Cardiac septum (tissue), 1 donor: ENCODE measurements at regions of chr15 and their contacts with region 1.

Region 1: GRCh38 chr15:57647791-57648130 is 56.1 kb downstream of the MYZAP start:
- DNase-seq: no peak

Region 2: GRCh38 chr15:57596978-57597377 is 50.8 kb before region 1 on chr15:
- intact Hi-C with region 1: loop called (anchors 2 kb)
- DNase-seq: no peak